IMR-90 (cell line): ENCODE measurements at regions of chr5 and their contacts with region 1.

Region 1: GRCh38 chr5:170552621-170553115 is 48.8 kb downstream of the KCNIP1 start:
- DNase-seq: peak; percentile 88
- ATAC-seq: peak; percentile 96
- H3K4me3 ChIP-seq: no peak overlapping the region
- H3K27ac ChIP-seq: no peak overlapping the region
- H3K4me1 ChIP-seq: peaks cover 2% of the 10 kb centered on the region; the same call in 1 of the 2 replicates
- H3K27me3 ChIP-seq: no peaks in the 10 kb centered on the region; the same call in 1 of the 2 replicates
- CTCF ChIP-seq: no peak
- POLR2A ChIP-seq: no peak
- RAD21 ChIP-seq: no peak

Region 2: DNA sequence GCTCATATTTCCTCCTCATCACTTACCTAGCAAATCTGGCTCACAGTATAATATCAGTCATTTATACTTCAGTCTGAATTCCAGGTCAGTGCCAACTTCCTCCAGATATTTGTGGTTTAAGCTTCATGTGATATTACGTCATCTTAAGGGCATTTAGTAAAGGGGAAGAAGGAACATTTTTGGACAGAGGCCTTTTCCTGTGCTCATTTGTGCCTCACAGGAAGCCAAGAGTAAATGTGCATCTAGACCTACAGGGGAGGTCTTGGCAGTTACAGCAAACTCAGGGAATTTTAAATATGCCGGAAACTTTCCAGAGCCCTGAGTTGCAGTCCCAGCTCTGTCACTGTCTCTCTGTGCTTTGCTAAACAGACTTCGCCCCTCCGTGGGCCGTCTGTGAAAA is 61.2 kb before region 1 on chr5:
- CTCF ChIA-PET with region 1: no interaction called
- POLR2A ChIA-PET with region 1: no interaction called
- dilution Hi-C with region 1: no loop called
- in situ Hi-C with region 1: no loop called
- intact Hi-C with region 1: loop called (anchors 5 kb)
- DNase-seq: peak; percentile 84
- ATAC-seq: peak; percentile 79
- H3K4me3 ChIP-seq: no peak overlapping the region
- H3K27ac ChIP-seq: no peak overlapping the region
- H3K4me1 ChIP-seq: no peaks in the 10 kb centered on the region
- H3K27me3 ChIP-seq: no peaks in the 10 kb centered on the region; the same call in 1 of the 2 replicates
- CTCF ChIP-seq: no peak
- POLR2A ChIP-seq: no peak
- RAD21 ChIP-seq: no peak

Region 3: DNA sequence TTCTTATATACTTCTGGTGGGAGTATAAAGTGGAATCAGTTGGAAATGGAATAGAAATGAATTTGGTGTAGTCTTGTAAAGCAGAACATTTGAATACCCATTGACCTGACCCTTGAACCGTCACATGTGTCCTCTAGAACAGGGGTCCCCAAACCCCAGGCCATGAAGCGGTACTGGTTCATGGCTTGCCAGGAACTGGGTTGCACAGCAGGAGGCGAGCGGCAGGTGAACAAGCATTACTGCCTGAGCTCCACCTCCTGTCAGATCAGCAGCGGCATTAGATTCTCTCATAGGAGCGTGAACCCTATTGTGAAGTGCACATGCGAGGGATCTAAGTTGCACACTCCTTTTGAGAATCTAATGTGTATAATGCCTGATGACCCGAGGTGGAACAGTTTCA is 389.1 kb after region 1 on chr5:
- CTCF ChIA-PET with region 1: no interaction called
- POLR2A ChIA-PET with region 1: no interaction called
- dilution Hi-C with region 1: no loop called
- in situ Hi-C with region 1: no loop called
- intact Hi-C with region 1: no loop called
- DNase-seq: no peak
- ATAC-seq: no peak
- H3K4me3 ChIP-seq: no peak overlapping the region
- H3K27ac ChIP-seq: no peak overlapping the region
- H3K4me1 ChIP-seq: no peaks in the 10 kb centered on the region
- H3K27me3 ChIP-seq: no peaks in the 10 kb centered on the region
- CTCF ChIP-seq: no peak
- POLR2A ChIP-seq: no peak
- RAD21 ChIP-seq: no peak